ENCODE measurements at regions of chr16 and their contacts with region 1.

Region 1: DNA sequence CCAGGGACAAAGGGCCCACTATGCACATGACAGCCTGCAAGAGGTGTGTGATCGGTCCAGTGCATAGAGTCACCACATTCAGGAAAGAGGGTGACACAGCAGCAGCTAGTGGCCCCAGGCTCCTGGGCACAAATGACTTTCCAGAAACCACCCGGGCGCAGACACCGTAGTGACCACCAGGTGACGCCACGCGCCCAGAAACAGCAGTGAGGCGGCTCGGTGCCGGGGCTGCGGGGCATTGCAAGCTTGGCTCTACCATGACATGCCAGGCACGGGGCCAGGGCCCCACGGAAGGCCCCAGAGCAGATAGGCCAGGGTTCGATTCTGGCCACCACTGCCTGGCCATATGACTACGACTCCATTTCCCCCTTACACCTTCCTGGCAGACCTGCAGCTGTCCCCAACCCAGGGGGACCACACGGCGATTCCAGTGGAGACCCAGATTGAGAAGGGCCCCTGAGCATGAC is 6.7 kb downstream of the RHBDF1 start:
- DNase-seq: peak; percentile 89
- CTCF ChIP-seq: peak; percentile 97

Region 2: GRCh38 chr16:53346-54236 is 12.1 kb before region 1 on chr16 and contains the starts of genes POLR3K and SNRNP25:
- CTCF ChIA-PET with region 1: interaction called, 21 read pairs
- POLR2A ChIA-PET with region 1: no interaction called
- DNase-seq: peak; percentile 99
- CTCF ChIP-seq: no peak

Region 3: GRCh38 chr16:106623-107324 is 41.1 kb after region 1 on chr16:
- CTCF ChIA-PET with region 1: interaction called, 53 read pairs
- POLR2A ChIA-PET with region 1: no interaction called
- DNase-seq: peak; percentile 83
- CTCF ChIP-seq: peak; percentile 81

Region 4: GRCh38 chr16:180938-181667 is 115.4 kb after region 1 on chr16:
- CTCF ChIA-PET with region 1: interaction called, 29 read pairs
- POLR2A ChIA-PET with region 1: no interaction called
- DNase-seq: peak; percentile 93
- CTCF ChIP-seq: peak; percentile 98

Region 5: DNA sequence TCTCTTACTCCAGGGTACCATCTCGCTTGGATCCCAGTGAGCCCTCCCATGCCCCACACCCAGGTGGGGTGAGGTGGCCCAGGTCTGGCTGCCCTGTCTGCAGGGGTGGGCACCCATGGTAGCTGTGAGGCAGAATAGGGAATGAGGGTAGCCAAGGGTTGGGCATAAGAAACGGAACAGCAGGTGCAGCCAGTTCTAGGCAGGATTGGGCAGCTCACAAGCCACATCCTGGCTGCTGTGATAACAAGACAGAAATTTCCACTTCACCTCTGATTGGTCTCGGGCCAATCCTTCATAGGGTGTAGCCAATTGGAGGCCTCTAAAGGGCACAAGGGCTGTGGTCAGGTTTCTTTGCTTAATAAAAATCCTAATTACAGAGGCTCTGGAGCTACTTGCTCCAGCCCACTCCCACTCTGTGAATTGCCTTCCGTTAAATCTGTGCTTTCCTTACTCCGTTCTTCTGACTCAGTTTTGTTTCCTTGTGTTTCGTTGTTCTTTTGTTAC is 213.2 kb after region 1 on chr16:
- CTCF ChIA-PET with region 1: no interaction called
- POLR2A ChIA-PET with region 1: no interaction called
- DNase-seq: no peak
- CTCF ChIP-seq: no peak

Region 6: DNA sequence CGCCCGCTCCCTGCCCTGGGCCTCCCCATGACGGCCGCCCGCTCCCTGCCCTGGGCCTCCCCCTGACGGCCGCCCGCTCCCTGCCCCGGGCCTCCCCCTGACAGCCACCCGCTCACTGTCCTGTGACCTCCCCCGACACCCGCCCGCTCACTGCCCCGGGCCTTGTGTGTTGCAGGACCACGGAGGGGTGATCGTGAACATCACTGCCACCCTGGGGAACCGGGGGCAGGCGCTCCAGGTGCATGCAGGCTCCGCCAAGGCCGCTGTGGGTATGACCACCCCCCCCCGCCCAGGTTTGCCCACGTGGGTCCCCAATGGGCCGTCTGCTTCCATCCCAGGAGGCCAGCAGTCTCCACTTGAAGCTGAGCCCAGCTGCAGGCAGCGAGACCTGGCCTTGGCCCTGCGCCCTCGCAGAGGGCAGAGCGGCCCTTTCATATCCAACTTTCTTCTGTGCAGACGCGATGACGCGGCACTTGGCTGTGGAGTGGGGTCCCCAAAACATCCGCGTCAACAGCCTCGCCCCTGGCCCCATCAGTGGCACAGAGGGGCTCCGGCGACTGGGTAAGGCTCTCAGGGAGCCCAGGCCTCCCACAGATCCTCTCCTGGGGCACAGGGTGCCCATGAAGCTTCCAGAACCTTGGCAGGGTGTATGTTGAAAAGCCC is 344.9 kb after region 1 on chr16:
- CTCF ChIA-PET with region 1: no interaction called
- POLR2A ChIA-PET with region 1: no interaction called
- DNase-seq: no peak
- CTCF ChIP-seq: no peak

Measured in GM10248 (cell line).